Dorsolateral prefrontal cortex (tissue), 120 donors: ENCODE measurements at regions of chr12 and their contacts with region 1.

Region 1: DNA sequence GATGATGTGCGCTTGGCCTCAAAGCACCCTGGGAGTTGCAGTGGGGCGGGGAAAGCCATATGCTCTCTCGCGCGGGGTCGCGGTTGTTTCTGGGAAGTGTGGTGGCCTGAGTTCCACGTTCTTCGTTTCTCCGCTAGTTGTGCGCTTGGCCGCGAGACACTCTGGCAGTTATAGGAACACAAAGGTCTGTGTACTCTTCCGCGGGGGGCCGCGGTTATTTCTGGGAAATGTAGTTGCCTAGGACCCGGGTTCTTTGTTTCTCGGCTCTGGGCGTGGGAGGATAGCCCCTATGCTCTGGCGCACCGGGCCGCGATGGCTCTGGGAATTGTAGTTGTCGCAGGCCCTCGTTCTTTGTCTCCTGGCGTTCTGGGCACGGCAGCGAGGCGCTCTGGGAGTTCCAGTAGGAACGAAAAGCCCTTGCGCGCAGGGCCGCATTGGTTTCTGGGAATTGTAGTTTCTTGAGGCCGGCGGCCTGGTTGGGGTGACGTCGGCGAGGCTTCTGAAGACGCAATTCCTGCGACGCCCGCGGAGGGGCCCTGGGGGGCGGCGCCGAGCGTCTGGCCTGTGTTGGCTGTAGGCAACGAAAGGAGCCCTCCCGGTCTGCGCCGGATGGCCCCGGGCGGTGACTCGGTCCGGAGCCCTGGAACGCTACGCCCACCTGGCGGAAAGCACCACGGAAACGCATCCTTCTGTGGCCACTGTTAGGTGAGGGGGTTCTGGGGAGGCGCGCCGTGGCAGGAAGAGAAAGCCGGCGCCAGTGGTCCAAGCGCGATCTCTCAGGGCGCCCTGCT is at the start of gene ZNF140:
- DNase-seq: peak; percentile 96 to 99 (median 98)
- H3K4me3 ChIP-seq: peak within 1 kb of the TSS; percentile 72 to 100 (median 94)
- H3K27ac ChIP-seq: peak within 1 kb of the TSS; percentile 88 to 100 (median 97)
- H3K27me3 ChIP-seq: peaks cover 0 to 2% (median 0%) of the 10 kb centered on the region in 45 donors
- CTCF ChIP-seq: peak in 27 of 56 donors; percentile 5 to 52 (median 29)
- total RNA-seq, gene ZNF140: 9.3 to 21.3 (median 13.5) TPM

Region 2: DNA sequence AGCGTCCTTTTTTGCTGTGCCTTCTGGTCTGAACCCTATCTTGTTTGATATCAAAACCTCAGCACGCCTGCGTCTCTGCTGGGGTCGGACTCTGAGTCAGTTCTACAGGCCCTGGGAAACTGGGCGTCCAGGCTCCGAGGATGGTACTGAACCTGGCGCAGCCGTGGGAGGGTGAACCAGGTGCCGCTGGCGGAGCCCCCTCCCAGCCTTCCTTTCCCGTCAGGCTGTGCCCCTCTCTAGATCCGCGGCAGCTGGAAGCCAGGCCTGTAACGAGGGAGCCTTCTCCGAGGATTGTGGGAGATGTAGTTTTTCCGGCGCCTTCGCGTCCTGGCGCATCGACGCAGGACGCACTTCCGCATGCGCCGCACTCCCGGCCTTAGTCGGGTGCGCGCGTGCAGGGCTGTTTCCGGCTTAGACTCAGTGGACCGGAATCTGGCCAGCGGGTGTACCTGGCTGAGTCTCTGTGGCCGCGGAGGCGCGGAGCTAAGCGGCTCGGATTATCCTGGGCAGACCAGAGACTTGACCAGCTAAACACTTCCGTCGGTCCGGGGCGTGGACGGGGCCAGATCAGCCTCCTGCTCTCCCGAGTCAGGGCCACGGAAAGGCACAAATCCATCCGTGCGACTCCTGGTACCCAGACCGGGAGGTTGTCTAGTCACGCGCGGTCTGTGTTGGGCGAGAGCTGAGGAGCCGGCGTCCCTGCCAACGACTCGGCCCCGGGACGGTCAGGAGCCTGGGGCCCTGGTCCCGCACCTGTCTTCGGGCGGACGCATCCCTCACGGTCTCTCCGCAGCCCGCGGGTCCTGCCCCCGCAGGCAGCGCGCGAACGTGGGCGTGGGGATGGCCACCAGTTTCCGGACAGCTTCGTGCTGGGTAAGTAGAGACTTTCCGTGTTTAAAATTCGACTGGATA is 94.3 kb before region 1 on chr12 and contains the start of gene ZNF26:
- intact Hi-C with region 1: loop called (anchors 1 kb)
- DNase-seq: peak; percentile 83 to 94 (median 92)
- H3K4me3 ChIP-seq: peak within 1 kb of the TSS; percentile 73 to 100 (median 96)
- H3K27ac ChIP-seq: peak within 1 kb of the TSS; percentile 9 to 95 (median 85)
- H3K27me3 ChIP-seq: no peaks in the 10 kb centered on the region
- CTCF ChIP-seq: peak in 25 of 56 donors; percentile 9 to 50 (median 27)
- total RNA-seq, gene ZNF26: 9.4 to 26.4 (median 16.9) TPM

Region 3: DNA sequence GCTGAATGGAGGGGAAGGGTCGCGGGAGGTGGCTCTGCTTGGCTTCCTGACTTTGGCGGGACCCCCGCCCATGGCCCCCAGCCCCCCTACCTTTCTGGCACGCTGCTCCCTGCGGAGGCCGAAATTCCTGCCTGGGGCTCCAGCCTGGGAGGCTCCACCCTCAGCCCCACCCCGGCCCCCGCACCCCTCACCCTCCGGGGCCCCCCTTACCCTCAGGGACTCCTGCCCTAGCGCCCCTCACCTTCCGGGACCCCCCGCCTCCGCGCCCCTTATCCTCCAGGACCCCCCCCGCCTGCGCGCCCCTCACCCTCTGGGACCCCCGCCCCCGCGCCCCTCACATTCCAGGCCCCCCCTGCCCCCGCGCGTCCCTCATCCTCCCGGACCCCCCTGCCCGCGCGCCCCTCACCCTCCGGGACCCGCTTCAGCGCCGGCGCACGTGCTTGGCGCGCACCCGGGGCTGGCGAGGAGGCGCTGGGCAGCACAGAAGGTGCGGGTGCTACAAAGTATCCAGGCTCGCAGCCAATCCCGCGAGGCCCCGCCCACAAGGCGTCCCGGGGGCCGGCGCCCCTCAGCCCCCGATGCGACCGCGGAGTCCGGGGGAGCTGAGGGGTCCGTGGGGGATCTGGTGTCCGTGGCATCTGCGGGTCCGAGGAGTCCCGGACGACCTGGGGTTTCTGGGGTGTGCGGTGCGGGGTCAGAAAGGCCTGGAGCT is 155.0 kb after region 1 on chr12 and contains the start of gene ANHX:
- intact Hi-C with region 1: no loop called
- DNase-seq: no peak
- H3K4me3 ChIP-seq: no peak within 1 kb of the TSS
- H3K27ac ChIP-seq: no peak within 1 kb of the TSS
- H3K27me3 ChIP-seq: peaks cover 0 to 21% (median 5%) of the 10 kb centered on the region in 45 donors
- CTCF ChIP-seq: no peak
- total RNA-seq, gene ANHX: not detected